Adrenal gland (tissue), 19 donors: ENCODE measurements at regions of chr13 and their contacts with region 1.

Region 1: DNA sequence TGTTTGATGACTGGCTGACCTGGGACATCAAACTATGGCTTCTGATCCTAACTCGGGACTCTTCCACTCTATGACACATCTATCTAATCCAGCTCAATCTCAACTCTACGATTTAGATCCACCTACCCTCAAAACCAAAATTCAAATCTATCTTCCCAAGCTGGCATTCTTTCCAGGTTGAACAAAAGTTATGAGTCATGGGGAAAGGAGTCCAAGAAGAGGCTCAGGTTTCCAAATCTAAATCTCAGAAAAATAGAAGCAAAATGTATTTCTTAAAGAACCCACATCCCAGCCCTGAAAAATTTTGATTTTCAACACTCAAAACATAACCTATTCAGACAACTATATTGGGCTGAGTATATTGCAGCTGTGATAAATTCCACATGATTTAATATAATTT is 143.9 kb upstream of the IPO5 start:
- DNase-seq: no peak
- H3K4me3 ChIP-seq: no peak overlapping the region
- H3K27ac ChIP-seq: no peak overlapping the region
- H3K4me1 ChIP-seq: no peaks in the 10 kb centered on the region
- H3K27me3 ChIP-seq: no peaks in the 10 kb centered on the region
- CTCF ChIP-seq: no peak
- POLR2A ChIP-seq: no peak

Region 2: GRCh38 chr13:96338030-96338429 is 1471.5 kb before region 1 on chr13:
- intact Hi-C with region 1: no loop called
- DNase-seq: peak in 3 of 7 donors; percentile 9 to 43 (median 29)
- H3K4me3 ChIP-seq: no peak overlapping the region
- H3K27ac ChIP-seq: no peak overlapping the region
- H3K4me1 ChIP-seq: no peaks in the 10 kb centered on the region
- H3K27me3 ChIP-seq: no peaks in the 10 kb centered on the region
- CTCF ChIP-seq: no peak
- POLR2A ChIP-seq: no peak

Region 3: DNA sequence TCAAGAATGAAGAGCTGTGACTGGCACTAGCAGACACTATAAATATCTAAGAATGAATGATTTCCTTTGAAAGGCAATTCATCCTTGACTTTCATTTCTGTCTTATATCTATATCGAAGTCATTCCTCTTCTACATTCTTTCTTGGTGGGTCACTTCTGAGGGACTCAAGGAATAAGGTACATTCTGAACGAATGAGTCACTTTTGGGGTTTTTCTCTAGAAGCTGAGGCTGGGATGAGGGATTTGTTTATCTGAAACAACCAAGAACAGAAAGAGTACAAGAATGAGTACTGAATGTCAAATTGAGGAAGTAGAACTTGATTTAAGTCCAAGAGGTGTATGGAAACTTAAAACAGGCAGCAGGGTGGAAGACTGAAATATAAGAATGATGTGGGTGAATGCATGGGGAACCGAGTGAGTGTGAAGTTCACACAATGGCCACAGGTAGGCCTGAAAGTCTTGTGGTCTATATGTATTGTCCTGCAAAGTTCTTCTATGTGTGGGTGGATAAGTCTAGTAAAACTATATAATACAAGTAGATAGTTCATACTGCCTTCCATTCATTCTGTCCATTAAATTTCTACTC is 1159.2 kb before region 1 on chr13:
- intact Hi-C with region 1: no loop called
- DNase-seq: no peak
- H3K4me3 ChIP-seq: no peak overlapping the region
- H3K27ac ChIP-seq: no peak overlapping the region
- H3K4me1 ChIP-seq: no peaks in the 10 kb centered on the region
- H3K27me3 ChIP-seq: no peaks in the 10 kb centered on the region
- CTCF ChIP-seq: no peak
- POLR2A ChIP-seq: no peak

Region 4: GRCh38 chr13:97018029-97018831 is 791.3 kb before region 1 on chr13:
- intact Hi-C with region 1: loop called (anchors 10 kb)
- DNase-seq: peak; percentile 30 to 78 (median 40)
- H3K4me3 ChIP-seq: no peak overlapping the region
- H3K27ac ChIP-seq: no peak overlapping the region
- H3K4me1 ChIP-seq: no peaks in the 10 kb centered on the region
- H3K27me3 ChIP-seq: no peaks in the 10 kb centered on the region
- CTCF ChIP-seq: peak; percentile 73 to 93 (median 80)
- POLR2A ChIP-seq: no peak

Region 5: DNA sequence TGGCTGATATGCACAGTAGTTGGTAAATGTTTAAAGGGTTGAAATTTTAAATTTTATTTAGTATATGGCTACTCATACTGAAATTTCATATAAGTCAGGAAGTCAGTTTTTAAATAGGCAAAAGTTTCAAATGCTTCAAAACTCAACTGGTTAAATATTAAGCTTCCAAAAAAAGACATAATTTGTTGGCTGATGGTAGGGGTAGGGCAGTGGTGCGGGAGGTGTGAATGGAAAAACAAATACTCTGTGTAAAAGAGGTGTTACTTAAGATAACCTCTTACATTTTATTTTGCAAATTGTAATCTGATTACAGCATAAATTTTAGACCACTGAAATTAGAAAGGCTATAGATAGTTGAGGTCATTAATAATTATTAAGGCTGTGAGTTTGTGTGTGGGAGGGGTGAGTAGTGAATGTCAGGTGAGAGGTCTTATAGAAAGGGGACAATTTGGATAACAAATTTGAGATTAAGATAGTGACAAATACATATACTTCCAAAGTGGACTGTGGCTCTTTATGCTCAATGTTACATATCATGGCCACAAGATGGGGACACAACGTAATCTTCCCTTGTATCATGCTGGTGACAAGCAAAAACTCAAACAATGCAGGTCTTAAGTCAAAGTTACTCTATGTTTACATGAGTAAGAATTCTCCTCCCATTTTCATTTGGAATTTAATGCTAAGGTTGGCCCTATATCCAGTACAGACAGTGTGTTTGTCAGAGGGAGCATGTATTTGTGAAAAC is 778.7 kb before region 1 on chr13:
- intact Hi-C with region 1: loop called in 1 of 2 experiments (anchors 10 kb)
- DNase-seq: peak in 1 of 7 donors; percentile 29
- H3K4me3 ChIP-seq: no peak overlapping the region
- H3K27ac ChIP-seq: no peak overlapping the region
- H3K4me1 ChIP-seq: peaks cover 0 to 6% of the 10 kb centered on the region in 2 donors
- H3K27me3 ChIP-seq: peaks cover 3% of the 10 kb centered on the region
- CTCF ChIP-seq: peak in 5 of 6 experiments; percentile 35 to 46 (median 40)
- POLR2A ChIP-seq: no peak

Region 6: DNA sequence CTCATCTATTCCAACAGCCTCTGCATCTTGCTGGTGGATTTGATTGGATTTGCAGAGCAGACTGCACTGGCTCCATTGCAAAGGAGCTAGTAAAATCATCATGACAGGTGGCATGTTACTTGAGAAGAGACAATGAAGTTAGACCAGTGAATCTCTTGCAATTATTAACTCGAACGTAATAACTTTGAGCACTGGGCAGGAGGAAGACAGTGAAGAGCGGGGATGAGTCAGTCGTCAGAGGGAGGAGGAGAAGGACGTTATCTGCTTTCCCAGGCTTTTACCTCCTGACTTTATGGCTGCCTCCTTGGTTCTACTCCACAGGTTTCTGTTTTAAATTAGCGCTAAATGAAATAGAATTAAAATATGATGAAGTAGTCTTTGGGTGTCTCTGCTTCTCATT is 113.9 kb before region 1 on chr13:
- intact Hi-C with region 1: no loop called
- DNase-seq: no peak
- H3K4me3 ChIP-seq: no peak overlapping the region
- H3K27ac ChIP-seq: no peak overlapping the region
- H3K4me1 ChIP-seq: no peaks in the 10 kb centered on the region
- H3K27me3 ChIP-seq: no peaks in the 10 kb centered on the region
- CTCF ChIP-seq: no peak
- POLR2A ChIP-seq: no peak

Region 7: GRCh38 chr13:98293103-98293502 is 483.5 kb after region 1 on chr13:
- intact Hi-C with region 1: no loop called
- DNase-seq: no peak
- H3K4me3 ChIP-seq: no peak overlapping the region
- H3K27ac ChIP-seq: peak overlapping the region in 1 of 5 donors; percentile 25
- H3K4me1 ChIP-seq: peaks cover 4 to 21% of the 10 kb centered on the region in 2 donors
- H3K27me3 ChIP-seq: no peaks in the 10 kb centered on the region
- CTCF ChIP-seq: no peak
- POLR2A ChIP-seq: no peak